Dendritic cell treated with granulocyte-macrophage colony-stimulating factor and Interleukin-4, amounts not matched to agents 40 ng/mL and 50 ng/mL, for 4 days (primary cell): ENCODE measurements at regions of chr3 and their contacts with region 1.

Region 1: DNA sequence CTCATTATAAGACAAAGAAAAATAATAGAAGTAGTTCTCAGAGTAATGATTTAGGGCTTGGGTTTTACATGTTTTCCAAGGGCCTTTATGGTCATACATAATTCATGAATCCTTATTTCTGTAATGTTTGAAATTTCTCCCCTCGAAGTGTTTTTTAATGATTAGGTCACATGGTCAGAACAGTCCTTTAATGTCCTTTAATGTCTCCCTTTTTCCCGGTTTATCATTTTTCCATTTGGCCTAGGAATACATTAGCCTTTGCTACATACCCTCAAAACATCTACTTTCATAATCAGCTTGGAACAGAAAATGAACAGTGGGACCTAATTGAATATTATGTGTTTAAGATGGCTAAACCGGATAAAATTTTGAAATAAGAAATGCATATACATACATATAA is 159.9 kb upstream of the ROBO2 start:
- H3K4me3 Mint-ChIP-seq: no peak overlapping the region
- H3K27ac Mint-ChIP-seq: no peak overlapping the region
- H3K4me1 Mint-ChIP-seq: no peaks in the 10 kb centered on the region
- H3K27me3 Mint-ChIP-seq: no peaks in the 10 kb centered on the region

Region 2: DNA sequence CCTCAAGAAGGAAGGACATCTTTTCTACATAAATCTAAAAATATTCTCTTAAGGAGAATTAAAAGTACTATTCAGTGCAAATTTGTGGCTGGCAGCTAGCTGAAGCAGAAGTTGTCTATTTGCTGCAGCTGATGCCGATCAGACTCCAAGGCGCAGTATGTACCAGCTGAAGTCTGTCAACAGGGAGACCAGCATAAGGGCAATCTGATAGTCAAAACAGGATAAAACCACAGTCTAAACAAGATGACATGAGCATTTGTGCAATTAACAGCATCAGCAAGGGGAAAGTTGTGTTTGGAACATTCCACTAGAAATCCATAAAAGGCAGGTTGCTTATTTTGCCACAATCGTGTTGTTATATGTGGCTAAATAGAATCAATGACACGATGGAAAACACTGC is 38.2 kb before region 1 on chr3:
- intact Hi-C with region 1: no loop called
- H3K4me3 Mint-ChIP-seq: no peak overlapping the region
- H3K27ac Mint-ChIP-seq: no peak overlapping the region
- H3K4me1 Mint-ChIP-seq: no peaks in the 10 kb centered on the region
- H3K27me3 Mint-ChIP-seq: no peaks in the 10 kb centered on the region

Region 3: GRCh38 chr3:76917436-76917835 is 37.5 kb after region 1 on chr3:
- intact Hi-C with region 1: no loop called
- H3K4me3 Mint-ChIP-seq: no peak overlapping the region
- H3K27ac Mint-ChIP-seq: no peak overlapping the region
- H3K4me1 Mint-ChIP-seq: no peaks in the 10 kb centered on the region
- H3K27me3 Mint-ChIP-seq: no peaks in the 10 kb centered on the region

Region 4: GRCh38 chr3:76930712-76931111 is 50.8 kb after region 1 on chr3:
- intact Hi-C with region 1: loop called (anchors 5 kb)
- H3K4me3 Mint-ChIP-seq: no peak overlapping the region
- H3K27ac Mint-ChIP-seq: no peak overlapping the region
- H3K4me1 Mint-ChIP-seq: no peaks in the 10 kb centered on the region
- H3K27me3 Mint-ChIP-seq: no peaks in the 10 kb centered on the region